Activated CD4-positive, alpha-beta T cell treated with anti-CD3 and anti-CD28 coated beads, Interleukin-2, amount 10 ng/mL, durations not matched to agents 24 days and 14 days (primary cell): ENCODE measurements at regions of chr10 and their contacts with region 1.

Region 1: DNA sequence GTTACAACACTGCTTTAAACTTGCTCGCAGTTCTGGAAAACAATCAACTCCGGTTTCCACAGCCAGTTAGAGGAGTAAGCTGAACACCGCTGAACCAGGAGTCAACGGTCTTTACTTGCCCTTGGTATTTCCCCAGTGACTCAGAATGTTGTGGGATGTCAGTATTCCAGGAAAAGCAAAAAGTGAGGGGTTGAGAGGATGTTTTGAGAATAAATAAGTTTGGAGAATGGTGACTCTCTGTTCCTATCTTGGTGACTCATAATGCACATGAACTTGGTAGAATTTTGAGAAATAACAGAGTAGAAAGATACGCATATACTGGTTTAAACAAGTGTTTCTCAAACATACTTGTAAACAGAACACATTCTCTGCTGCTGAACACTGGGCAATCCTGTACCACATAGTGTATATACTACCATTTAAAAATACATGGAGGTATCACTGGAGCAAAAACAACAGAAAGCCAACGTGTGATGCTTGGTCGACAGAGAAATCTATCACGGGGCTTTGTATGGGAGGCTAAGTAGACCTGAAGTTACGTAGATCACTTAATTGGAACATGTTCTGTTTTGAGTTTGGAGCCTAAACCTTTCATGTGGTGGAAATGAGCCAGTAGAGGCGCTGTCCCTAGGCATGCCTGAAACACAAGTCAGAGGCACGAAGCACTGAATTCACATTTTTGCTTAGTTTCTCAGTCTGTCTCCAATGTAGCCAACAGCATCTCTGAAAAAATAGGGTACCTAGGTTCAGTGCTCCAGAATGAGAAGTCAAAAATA is 534.3 kb downstream of the PARD3 start:
- DNase-seq: peak; percentile 61
- H3K4me3 Mint-ChIP-seq: peak overlapping the region; percentile 39
- H3K27ac Mint-ChIP-seq: peak overlapping the region; percentile 83
- H3K4me1 Mint-ChIP-seq: peaks cover 25% of the 10 kb centered on the region
- H3K27me3 Mint-ChIP-seq: peaks cover 4% of the 10 kb centered on the region

Region 2: DNA sequence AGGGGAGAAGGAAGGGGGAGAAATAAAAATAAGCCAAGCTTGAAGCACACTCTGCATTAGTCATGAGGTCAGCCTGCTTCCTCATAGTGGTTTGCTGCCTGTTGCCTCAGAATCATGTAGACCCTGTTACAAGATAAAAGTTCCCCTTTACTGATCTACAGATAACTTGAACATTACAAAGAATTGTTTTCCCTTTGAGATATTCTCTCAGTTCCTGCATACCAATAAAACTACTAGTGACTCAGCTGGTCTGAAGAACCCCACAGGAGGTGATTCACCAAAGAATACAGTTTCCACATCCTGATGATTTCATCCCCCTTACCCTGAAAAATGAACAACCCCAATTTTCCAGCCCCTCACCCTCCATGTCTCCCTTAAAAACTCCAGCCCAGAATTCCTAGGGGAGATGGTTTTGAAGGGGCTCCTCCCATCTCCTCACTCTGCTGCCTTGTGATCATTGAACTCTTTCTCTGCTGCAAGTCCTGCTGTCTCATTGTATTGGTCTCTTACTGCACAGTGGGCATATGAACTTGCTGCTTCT is 914.8 kb before region 1 on chr10:
- intact Hi-C with region 1: loop called (anchors 10 kb)
- DNase-seq: peak; percentile 57
- H3K4me3 Mint-ChIP-seq: no peak overlapping the region
- H3K27ac Mint-ChIP-seq: peak overlapping the region; percentile 86
- H3K4me1 Mint-ChIP-seq: peaks cover 15% of the 10 kb centered on the region
- H3K27me3 Mint-ChIP-seq: no peaks in the 10 kb centered on the region

Region 3: GRCh38 chr10:33509231-33509831 is 771.5 kb before region 1 on chr10:
- intact Hi-C with region 1: loop called (anchors 10 kb)
- DNase-seq: peak; percentile 56
- H3K4me3 Mint-ChIP-seq: no peak overlapping the region
- H3K27ac Mint-ChIP-seq: no peak overlapping the region
- H3K4me1 Mint-ChIP-seq: peaks cover 3% of the 10 kb centered on the region
- H3K27me3 Mint-ChIP-seq: peaks cover 3% of the 10 kb centered on the region

Region 4: GRCh38 chr10:34121781-34122628 is 158.8 kb before region 1 on chr10:
- intact Hi-C with region 1: loop called (anchors 2 kb)
- DNase-seq: peak; percentile 77
- H3K4me3 Mint-ChIP-seq: peak overlapping the region; percentile 56
- H3K27ac Mint-ChIP-seq: peak overlapping the region; percentile 77
- H3K4me1 Mint-ChIP-seq: peaks cover 24% of the 10 kb centered on the region
- H3K27me3 Mint-ChIP-seq: no peaks in the 10 kb centered on the region

Region 5: DNA sequence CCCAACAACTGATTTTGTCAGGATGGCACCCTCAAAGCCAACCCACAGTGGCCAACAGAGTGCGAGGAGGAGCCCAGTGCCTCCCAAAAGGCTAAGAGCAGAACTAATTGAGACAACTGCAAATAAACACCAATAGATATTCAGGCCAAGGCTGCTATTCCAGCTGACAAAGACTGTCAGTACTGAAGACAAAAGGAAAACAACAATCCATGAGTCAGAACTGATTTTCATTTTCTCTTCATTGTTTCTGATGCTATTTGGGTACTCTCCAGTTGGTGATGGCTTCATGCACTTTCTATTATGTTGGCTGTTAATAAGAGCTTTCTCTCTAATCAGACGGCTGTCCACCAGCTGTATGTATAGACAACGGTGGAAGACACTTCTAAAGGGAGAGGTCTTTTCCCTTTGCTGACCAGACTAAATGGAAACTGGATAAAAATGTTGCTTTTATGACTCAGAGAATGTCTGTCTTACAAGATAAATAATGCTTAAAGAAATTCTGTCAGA is 18.4 kb after region 1 on chr10:
- intact Hi-C with region 1: loop called (anchors 2 kb)
- DNase-seq: no peak
- H3K4me3 Mint-ChIP-seq: no peak overlapping the region
- H3K27ac Mint-ChIP-seq: no peak overlapping the region
- H3K4me1 Mint-ChIP-seq: no peaks in the 10 kb centered on the region
- H3K27me3 Mint-ChIP-seq: no peaks in the 10 kb centered on the region

Region 6: GRCh38 chr10:34374356-34375045 is 93.7 kb after region 1 on chr10:
- intact Hi-C with region 1: loop called (anchors 2 kb)
- DNase-seq: no peak
- H3K4me3 Mint-ChIP-seq: no peak overlapping the region
- H3K27ac Mint-ChIP-seq: no peak overlapping the region
- H3K4me1 Mint-ChIP-seq: peaks cover 4% of the 10 kb centered on the region
- H3K27me3 Mint-ChIP-seq: no peaks in the 10 kb centered on the region